Endothelial cell of umbilical vein (primary cell): ENCODE measurements at regions of chr9 and their contacts with region 1.

Region 1: GRCh38 chr9:19431361-19432171 is 22.8 kb downstream of the ACER2 start:
- DNase-seq: peak; percentile 95
- H3K4me3 ChIP-seq: no peak overlapping the region
- H3K27ac ChIP-seq: peak overlapping the region; percentile 45
- H3K4me1 ChIP-seq: peaks cover 14% of the 10 kb centered on the region
- H3K27me3 ChIP-seq: no peaks in the 10 kb centered on the region
- CTCF ChIP-seq: no peak
- POLR2A ChIP-seq: peak; percentile 52

Region 2: DNA sequence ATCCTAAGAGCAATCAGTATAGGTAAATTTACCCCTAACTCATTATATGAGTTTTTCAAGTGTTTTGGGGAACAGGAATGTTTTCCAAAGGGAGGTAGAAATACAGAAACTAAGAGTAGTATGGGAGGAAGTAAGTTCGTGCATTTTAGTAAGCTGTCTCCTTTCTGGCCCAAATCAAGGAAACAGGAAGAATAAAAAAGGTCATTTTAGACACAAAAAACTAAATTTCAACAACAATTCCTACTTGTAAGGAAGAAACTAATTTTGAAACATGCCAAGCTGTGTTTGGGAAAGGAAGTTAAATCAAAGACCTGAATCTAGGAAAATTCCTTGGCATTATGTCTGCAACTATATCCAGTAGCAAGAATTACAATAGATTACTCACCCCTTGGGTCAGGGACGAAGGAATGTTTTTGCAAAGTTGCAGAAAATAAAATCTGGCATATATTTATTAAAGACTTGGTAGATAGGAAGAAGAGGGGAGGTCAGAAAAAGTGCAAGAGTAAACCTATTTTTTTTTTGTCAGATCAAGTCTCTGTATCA is 45.0 kb before region 1 on chr9:
- CTCF ChIA-PET with region 1: no interaction called
- POLR2A ChIA-PET with region 1: no interaction called
- dilution Hi-C with region 1: no loop called
- intact Hi-C with region 1: loop called (anchors 1 kb)
- DNase-seq: peak; percentile 92
- H3K4me3 ChIP-seq: peak overlapping the region in 2 of 3 experiments; percentile 19 to 50
- H3K27ac ChIP-seq: peak overlapping the region; percentile 77
- H3K4me1 ChIP-seq: peaks cover 23% of the 10 kb centered on the region
- H3K27me3 ChIP-seq: no peaks in the 10 kb centered on the region
- CTCF ChIP-seq: no peak
- POLR2A ChIP-seq: no peak

Region 3: GRCh38 chr9:19533373-19533772 is 101.8 kb after region 1 on chr9:
- CTCF ChIA-PET with region 1: no interaction called
- POLR2A ChIA-PET with region 1: no interaction called
- dilution Hi-C with region 1: no loop called
- intact Hi-C with region 1: no loop called
- DNase-seq: no peak
- H3K4me3 ChIP-seq: no peak overlapping the region
- H3K27ac ChIP-seq: no peak overlapping the region
- H3K4me1 ChIP-seq: no peaks in the 10 kb centered on the region
- H3K27me3 ChIP-seq: no peaks in the 10 kb centered on the region
- CTCF ChIP-seq: no peak
- POLR2A ChIP-seq: no peak